H1 (cell line): ENCODE measurements at regions of chr3 and their contacts with region 1.

Region 1: DNA sequence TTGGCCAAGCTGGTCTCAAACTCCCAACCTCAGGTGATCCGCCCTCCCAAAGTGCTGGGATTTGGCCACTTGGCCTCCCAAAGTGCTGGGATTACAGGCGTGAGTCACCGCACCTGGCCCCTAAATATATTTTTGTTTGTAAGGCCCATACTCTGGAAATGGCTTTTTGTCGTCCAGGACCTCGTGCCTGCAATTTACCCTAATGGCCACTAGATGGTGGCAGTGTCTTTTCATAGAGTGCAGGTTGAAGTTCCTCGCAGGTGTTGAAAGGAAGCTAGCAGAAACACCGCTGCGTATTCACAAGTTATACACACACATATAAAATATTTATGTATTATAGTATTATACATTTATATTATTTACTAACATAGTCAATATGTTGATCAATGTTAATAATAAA is 97.2 kb downstream of the LRTM1 start:
- DNase-seq: peak; percentile 19 to 69
- H3K4me3 ChIP-seq: no peak overlapping the region
- H3K27ac ChIP-seq: no peak overlapping the region
- H3K4me1 ChIP-seq: no peaks in the 10 kb centered on the region; a peak in 1 of 7 replicates
- H3K27me3 ChIP-seq: no peaks in the 10 kb centered on the region
- CTCF ChIP-seq: peak; percentile 61 to 84 (median 75)
- EP300 ChIP-seq: no peak
- POLR2A ChIP-seq: no peak
- RAD21 ChIP-seq: peak; percentile 90 to 92

Region 2: GRCh38 chr3:54756330-54756731 is 74.3 kb before region 1 on chr3:
- CTCF ChIA-PET with region 1: no interaction called
- POLR2A ChIA-PET with region 1: no interaction called
- DNase-seq: no peak
- H3K4me3 ChIP-seq: no peak overlapping the region
- H3K27ac ChIP-seq: no peak overlapping the region
- H3K4me1 ChIP-seq: no peaks in the 10 kb centered on the region
- H3K27me3 ChIP-seq: no peaks in the 10 kb centered on the region
- CTCF ChIP-seq: no peak
- EP300 ChIP-seq: no peak
- POLR2A ChIP-seq: no peak
- RAD21 ChIP-seq: no peak

Region 3: DNA sequence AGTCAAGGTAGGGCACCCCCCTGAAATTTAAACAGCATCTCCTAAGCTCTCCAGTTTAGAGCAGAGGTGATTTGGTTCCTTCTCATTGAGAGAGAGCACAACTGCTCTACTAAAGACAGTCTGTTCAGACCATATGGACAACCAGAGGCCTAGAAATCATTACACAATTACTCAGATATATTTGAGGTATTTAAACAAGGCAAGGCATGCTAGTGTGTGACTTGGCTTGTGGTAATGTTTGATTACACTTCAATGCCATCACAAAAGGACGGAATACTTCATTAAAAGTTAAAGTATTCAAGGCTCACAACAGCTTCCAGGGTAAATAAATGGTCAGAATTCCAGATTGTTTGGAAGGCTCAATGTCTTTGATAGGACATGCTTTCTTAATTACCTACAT is 13.0 kb before region 1 on chr3:
- CTCF ChIA-PET with region 1: interaction called, 26 read pairs
- POLR2A ChIA-PET with region 1: no interaction called
- DNase-seq: no peak
- H3K4me3 ChIP-seq: no peak overlapping the region
- H3K27ac ChIP-seq: no peak overlapping the region
- H3K4me1 ChIP-seq: peaks cover 0 to 6% (median under 1%) of the 10 kb centered on the region in 4 experiments; a peak in 1 of 7 replicates
- H3K27me3 ChIP-seq: peaks cover 35 to 58% (median 48%) of the 10 kb centered on the region in 4 experiments
- CTCF ChIP-seq: no peak
- EP300 ChIP-seq: no peak
- POLR2A ChIP-seq: no peak
- RAD21 ChIP-seq: no peak

Region 4: GRCh38 chr3:54846119-54846518 is 15.5 kb after region 1 on chr3:
- CTCF ChIA-PET with region 1: interaction called, 70 read pairs
- POLR2A ChIA-PET with region 1: interaction called, 5 read pairs
- DNase-seq: no peak
- H3K4me3 ChIP-seq: no peak overlapping the region
- H3K27ac ChIP-seq: no peak overlapping the region
- H3K4me1 ChIP-seq: no peaks in the 10 kb centered on the region
- H3K27me3 ChIP-seq: no peaks in the 10 kb centered on the region
- CTCF ChIP-seq: no peak
- EP300 ChIP-seq: no peak
- POLR2A ChIP-seq: no peak
- RAD21 ChIP-seq: no peak

Region 5: DNA sequence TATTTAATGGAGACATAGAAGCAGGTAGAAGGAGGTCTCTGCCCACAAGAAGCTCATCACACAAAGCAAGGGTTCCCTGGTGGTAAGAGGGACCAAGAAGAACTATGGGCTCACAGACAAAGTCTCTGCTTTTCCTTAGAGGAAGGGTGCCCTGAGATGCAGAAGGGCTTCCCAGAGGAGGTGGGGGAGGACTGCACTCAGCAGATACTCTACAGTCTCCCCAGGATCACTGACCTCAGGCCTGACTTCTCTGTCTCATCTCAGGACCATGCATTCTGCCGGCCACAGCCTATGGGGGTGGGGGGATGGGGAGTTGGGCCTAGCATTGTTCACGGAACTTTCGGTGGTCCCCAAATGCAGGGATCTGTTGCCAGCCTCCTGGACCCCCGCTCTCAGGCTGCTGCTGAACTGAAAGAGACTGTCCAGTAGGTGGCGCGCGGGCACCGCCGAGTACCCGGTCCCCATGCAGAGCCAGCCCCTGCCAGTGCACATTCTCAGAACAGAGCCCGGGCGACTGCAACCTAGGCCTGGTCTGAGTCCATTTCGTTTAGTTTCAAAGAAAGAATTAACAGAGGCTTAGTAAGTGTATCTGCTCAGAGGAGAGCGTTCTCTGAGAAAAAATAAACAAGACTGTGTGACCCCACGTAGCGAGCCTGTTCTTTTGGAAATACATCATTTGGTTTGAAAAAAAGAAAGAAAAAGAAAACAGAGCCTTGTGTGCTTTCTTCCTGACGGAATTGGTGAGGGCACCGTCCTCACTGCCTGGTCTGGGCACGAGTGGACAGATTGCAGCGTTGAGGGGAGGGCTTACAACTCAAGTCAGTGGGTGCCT is 23.1 kb after region 1 on chr3:
- CTCF ChIA-PET with region 1: interaction called, 29 read pairs
- POLR2A ChIA-PET with region 1: interaction called, 5 read pairs
- DNase-seq: peak; percentile 36 to 93
- H3K4me3 ChIP-seq: no peak overlapping the region
- H3K27ac ChIP-seq: no peak overlapping the region
- H3K4me1 ChIP-seq: peaks cover 0 to 15% (median 9%) of the 10 kb centered on the region in 4 experiments; a peak in 5 of 7 replicates
- H3K27me3 ChIP-seq: 0 out of 7 replicates have a peak, but pooled peaks cover 0 to 2% (median 0%) of the 10 kb centered on the region in 4 experiments
- CTCF ChIP-seq: peak; percentile 81 to 94 (median 87)
- EP300 ChIP-seq: no peak
- POLR2A ChIP-seq: no peak
- RAD21 ChIP-seq: peak; percentile 95 to 97

Region 6: GRCh38 chr3:54859184-54859583 is 28.5 kb after region 1 on chr3:
- CTCF ChIA-PET with region 1: interaction called, 17 read pairs
- POLR2A ChIA-PET with region 1: no interaction called
- DNase-seq: no peak
- H3K4me3 ChIP-seq: no peak overlapping the region
- H3K27ac ChIP-seq: no peak overlapping the region
- H3K4me1 ChIP-seq: peaks cover 0 to 15% (median 9%) of the 10 kb centered on the region in 4 experiments; a peak in 6 of 7 replicates
- H3K27me3 ChIP-seq: peaks cover 0 to 2% (median under 1%) of the 10 kb centered on the region in 4 experiments; a peak in 1 of 7 replicates
- CTCF ChIP-seq: no peak
- EP300 ChIP-seq: no peak
- POLR2A ChIP-seq: no peak
- RAD21 ChIP-seq: no peak

Region 7: DNA sequence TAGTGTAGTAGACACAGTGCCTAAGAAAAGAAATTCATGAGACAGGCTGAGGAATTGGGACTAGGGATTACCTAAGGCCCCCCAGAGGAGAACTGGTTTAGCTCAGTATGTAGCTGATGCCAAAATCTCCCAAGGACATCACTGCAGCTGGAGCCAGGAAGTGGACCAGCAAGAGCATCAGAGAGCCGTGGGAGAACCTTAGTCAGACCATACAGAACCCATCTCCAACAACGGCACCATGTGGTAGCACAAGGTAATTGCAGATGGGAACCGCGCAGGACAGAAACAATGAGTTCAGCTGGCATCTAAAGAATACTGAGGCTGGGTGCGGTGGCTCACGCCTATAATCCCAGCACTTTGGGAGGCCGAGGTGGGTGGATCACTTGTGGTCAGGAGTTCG is 574.8 kb after region 1 on chr3:
- CTCF ChIA-PET with region 1: interaction called, 16 read pairs
- POLR2A ChIA-PET with region 1: no interaction called
- DNase-seq: peak; percentile 49 to 85
- H3K4me3 ChIP-seq: no peak overlapping the region
- H3K27ac ChIP-seq: no peak overlapping the region
- H3K4me1 ChIP-seq: no peaks in the 10 kb centered on the region
- H3K27me3 ChIP-seq: no peaks in the 10 kb centered on the region
- CTCF ChIP-seq: peak; percentile 84 to 89 (median 85)
- EP300 ChIP-seq: no peak
- POLR2A ChIP-seq: no peak
- RAD21 ChIP-seq: peak; percentile 92 to 94